ENCODE measurements at regions of chr5 and their contacts with region 1.

Region 1: GRCh38 chr5:139765409-139766217 is 30.0 kb upstream of the PSD2 start:
- DNase-seq: peak; percentile 90

Region 2: DNA sequence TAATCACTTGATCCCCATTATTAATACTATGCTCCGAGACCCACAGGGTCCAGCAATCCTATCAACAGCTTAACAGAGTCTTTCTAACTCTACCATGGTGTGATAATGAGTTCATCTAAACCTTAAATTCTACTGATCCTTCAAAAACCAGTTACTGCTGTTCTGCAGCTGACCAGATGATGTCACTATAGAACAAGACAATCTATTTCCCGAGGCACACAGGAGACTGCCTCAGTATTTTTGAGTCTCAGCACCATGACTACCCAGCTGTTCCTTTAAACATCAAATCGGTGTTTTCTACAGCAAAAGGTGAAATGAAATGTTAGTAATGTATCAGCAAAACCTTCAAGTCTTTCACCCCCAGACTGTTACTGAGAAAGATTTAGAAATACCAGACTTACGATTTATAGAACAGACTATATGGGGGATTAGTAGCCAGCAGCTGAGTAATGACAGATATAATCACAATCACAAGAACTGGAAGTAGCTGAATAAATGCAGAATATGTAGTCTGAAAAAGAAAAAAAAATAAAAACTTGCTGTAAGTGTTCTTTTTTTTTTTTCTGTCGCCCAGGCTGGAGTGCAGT is 343.2 kb before region 1 on chr5:
- intact Hi-C with region 1: loop called (anchors 10 kb)
- DNase-seq: no peak

Region 3: DNA sequence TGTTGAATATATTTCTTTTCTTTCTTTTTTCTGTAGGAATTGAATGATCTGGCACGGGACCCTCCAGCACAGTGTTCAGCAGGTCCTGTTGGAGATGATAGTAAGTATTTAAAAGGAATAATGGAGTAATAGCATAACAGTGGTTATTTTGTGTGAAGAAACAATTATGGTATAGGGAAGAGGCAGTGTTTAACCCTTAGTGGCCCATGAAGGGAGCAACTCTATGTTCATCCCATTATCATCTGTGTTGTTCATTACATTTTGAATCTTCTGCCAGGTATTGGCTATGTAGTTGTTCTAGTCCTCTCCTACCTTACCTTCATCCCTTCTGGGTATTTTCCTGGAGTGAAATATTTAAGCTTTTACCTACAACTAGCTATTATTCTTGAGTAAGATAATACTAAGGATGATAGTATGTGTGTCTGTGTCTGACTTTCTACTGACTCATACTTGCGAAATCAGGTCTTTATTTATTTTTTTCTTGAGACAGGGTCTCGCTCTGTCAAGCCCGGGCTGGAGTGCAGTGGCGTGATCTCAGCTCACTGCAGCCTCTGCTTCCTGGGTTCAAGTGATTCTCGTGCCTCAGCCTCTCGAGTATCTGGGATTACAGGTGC is 165.2 kb before region 1 on chr5:
- intact Hi-C with region 1: no loop called
- DNase-seq: no peak

Region 4: DNA sequence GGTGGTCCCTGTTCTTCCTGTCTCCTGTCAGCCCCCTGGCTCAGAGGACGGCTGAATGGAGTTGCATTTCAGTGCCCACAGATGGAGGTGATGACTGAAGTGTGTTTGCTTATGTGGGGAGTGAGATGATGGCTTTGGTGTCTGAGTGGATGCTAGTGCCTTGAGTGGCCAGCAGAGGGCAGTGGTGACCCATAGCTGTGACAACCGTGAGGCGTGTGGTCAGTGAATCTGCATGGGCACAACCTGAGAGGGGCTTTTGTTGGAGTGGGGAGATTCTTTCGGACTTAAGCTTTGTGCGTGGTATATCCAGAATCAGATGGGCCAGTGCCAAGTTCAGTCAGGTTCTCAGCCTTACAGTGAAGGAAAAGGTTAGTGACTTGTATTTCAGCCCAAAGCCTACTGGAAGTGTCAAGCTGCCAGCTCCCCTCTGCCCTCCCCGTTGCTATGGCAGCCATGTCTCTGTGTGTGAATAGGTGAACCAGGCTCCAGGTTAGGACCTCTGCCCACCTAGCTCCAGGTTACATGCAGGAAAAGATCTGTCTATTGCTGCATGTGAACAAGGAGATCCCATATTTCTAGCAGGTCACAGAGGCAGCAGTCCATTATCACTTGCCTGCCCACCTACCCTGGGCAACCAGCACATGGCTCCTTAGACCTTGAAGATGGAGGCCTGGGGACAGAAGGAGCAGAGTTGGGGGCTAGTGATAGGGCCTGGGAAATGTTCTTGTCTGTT is 132.2 kb before region 1 on chr5:
- intact Hi-C with region 1: loop called (anchors 1 kb)
- DNase-seq: peak; percentile 88

Region 5: DNA sequence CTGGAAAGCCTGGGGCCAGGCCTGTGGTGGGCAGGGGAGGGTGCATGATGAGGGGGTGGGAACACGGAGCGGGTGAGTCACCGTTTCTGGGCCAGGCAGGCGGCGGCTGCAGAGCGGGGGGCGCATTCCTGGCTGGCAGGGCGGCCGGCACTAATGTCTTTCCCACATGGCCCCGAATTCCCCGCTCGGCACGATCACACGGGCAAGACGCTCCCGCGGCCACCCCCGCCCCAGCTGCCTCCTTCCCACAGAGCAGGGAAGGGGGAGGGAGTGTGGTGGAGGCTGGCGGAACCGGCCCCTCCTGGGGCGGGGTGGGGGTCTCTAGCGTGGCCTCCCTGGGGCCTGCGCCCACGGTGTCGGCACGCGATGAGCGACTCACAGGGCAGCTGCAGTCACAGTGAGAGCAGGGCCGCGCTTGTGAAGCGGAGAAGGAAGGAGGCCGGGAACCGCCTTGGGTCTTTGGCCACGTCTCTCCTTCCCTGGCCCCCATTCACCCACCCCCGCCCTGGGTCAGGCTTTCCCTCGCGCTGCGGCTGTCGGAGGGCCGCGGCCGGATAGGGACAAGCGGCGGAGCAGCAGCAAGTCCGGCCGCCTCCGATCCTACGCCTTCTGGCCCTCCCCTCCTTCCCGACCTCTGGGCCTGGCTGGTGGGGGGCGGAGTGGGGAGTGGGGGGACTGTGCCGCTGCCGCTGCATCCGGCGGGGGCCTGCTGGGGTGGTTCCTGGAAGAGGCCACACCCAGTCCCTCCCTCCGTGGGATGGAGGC is 68.5 kb before region 1 on chr5:
- intact Hi-C with region 1: loop called (anchors 5 kb)
- DNase-seq: no peak